ENCODE measurements at regions of chr12 and their contacts with region 1.

Region 1: DNA sequence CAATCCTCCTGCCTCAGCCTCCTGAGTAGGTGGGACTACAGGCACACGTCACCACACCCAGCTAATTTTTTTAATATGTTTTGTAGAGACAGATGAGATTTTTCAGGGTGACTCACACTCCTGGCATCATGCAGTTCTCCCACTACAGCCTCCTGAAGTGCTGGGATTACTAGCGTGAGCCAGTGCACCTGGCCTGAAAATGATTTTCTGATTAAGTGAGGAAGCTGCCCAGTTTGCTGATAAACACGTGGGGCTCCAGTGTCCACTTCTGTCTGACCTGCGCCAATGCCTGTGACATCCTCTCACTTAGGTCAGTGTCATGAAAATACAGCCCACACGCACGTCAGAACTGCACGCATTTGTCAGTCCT is 37.0 kb upstream of the SFSWAP start:
- DNase-seq: peak in 1 of 7 donors; percentile 28
- H3K4me3 ChIP-seq: no peak overlapping the region
- H3K27ac ChIP-seq: no peak overlapping the region
- H3K4me1 ChIP-seq: no peaks in the 10 kb centered on the region
- H3K27me3 ChIP-seq: no peaks in the 10 kb centered on the region
- CTCF ChIP-seq: no peak
- POLR2A ChIP-seq: no peak

Region 2: DNA sequence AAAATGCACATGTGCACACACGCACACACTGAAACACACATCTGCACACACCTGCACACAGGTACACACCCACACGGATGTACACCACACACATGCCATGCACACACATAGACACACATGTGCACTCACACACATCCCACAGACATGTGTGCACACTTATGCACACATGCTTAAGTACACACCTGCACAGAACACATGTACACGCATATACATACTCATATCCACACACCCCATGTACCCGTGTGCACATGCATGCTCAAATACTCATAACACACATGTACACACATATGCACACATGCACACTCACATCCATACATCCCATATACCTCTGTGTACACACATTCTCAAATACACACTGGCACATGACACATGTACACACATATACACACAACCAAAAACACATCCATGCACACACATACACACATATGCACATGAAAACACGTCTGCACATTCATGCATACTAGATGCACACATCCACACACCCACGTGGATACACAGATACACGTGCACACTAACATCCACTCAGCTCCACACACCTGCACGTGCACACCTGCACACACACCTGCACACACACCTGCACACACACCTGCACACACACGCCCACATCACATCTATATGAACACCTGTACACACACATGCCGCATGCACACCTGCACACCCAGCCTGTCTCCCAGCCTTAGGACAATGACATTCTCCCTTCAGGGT is 383.5 kb before region 1 on chr12:
- intact Hi-C with region 1: loop called in 1 of 2 experiments (anchors 5 kb)
- DNase-seq: peak in 2 of 7 donors; percentile 4 to 21
- H3K4me3 ChIP-seq: no peak overlapping the region
- H3K27ac ChIP-seq: no peak overlapping the region
- H3K4me1 ChIP-seq: no peaks in the 10 kb centered on the region
- H3K27me3 ChIP-seq: no peaks in the 10 kb centered on the region
- CTCF ChIP-seq: no peak
- POLR2A ChIP-seq: no peak

Measured in adrenal gland (tissue), 19 donors.